Activated naive CD4-positive, alpha-beta T cell treated with anti-CD3 and anti-CD28 coated beads for 36 hours (primary cell): ENCODE measurements at regions of chr1 and their contacts with region 1.

Region 1: GRCh38 chr1:75991497-75992114 is 59.4 kb upstream of the ASB17 start:
- DNase-seq: peak; percentile 88
- H3K4me3 Mint-ChIP-seq: no peak overlapping the region
- H3K27ac Mint-ChIP-seq: no peak overlapping the region
- H3K4me1 Mint-ChIP-seq: no peaks in the 10 kb centered on the region
- H3K27me3 Mint-ChIP-seq: no peaks in the 10 kb centered on the region

Region 2: DNA sequence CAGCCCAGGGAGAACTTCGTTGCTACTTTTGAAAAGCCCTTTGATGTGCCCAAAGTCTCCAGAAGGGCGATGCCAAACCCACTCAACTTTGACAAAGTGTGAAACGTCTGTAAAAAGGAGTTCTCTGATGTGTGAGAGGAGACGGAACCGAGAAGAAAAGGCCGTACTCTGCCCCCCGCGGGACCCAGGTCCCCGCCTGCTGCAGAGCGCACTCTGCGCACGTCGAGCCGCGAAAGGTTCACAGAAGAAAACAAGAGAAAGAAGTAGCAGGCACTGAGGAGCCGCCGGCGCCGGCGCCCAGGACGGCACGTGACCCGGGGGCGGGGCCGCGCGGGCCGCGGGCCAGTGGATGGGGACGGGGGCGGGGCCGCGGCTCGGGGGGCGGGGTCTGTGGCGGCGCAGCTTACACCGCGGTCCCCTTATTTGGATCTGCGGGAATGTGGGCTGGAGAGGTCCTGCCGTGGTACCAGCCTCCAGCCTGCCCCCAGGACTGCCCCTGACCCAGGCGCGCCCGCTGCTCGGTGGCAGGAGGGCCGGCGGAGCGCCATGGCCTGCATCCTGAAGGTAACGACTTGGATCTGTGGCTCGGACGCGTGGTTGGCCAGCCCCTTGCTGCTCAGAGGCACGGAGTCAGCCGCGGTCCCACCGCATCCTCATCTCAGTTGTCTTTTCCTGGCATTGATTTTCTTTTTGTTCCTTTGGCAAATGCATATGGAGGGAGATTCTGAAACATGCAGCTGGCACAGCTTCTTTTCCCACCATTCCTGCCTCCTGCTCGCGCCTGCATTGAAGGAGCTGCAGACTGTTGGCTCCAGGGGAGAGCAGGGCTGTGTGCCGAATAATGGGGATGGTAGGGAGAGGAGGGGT is 82.9 kb after region 1 on chr1 and contains the start of gene ST6GALNAC3:
- CTCF ChIA-PET with region 1: no interaction called
- intact Hi-C with region 1: loop called (anchors 2 kb)
- DNase-seq: peak; percentile 78
- H3K4me3 Mint-ChIP-seq: peak within 1 kb of the TSS; percentile 83
- H3K27ac Mint-ChIP-seq: no peak within 1 kb of the TSS
- H3K4me1 Mint-ChIP-seq: peaks cover 25% of the 10 kb centered on the region
- H3K27me3 Mint-ChIP-seq: no peaks in the 10 kb centered on the region
- total RNA-seq, gene ST6GALNAC3: 2.5 to 2.8 TPM

Region 3: GRCh38 chr1:76140227-76140626 is 148.6 kb after region 1 on chr1:
- CTCF ChIA-PET with region 1: interaction called, 4 read pairs
- intact Hi-C with region 1: loop called (anchors 2 kb)
- DNase-seq: no peak
- H3K4me3 Mint-ChIP-seq: no peak overlapping the region
- H3K27ac Mint-ChIP-seq: no peak overlapping the region
- H3K4me1 Mint-ChIP-seq: peaks cover 7% of the 10 kb centered on the region
- H3K27me3 Mint-ChIP-seq: no peaks in the 10 kb centered on the region

Region 4: GRCh38 chr1:77126307-77126706 is 1134.7 kb after region 1 on chr1:
- CTCF ChIA-PET with region 1: no interaction called
- intact Hi-C with region 1: loop called (anchors 5 kb)
- DNase-seq: peak; percentile 36
- H3K4me3 Mint-ChIP-seq: no peak overlapping the region
- H3K27ac Mint-ChIP-seq: no peak overlapping the region
- H3K4me1 Mint-ChIP-seq: no peaks in the 10 kb centered on the region
- H3K27me3 Mint-ChIP-seq: no peaks in the 10 kb centered on the region